ENCODE measurements at regions of chr13 and their contacts with region 1.

Region 1: DNA sequence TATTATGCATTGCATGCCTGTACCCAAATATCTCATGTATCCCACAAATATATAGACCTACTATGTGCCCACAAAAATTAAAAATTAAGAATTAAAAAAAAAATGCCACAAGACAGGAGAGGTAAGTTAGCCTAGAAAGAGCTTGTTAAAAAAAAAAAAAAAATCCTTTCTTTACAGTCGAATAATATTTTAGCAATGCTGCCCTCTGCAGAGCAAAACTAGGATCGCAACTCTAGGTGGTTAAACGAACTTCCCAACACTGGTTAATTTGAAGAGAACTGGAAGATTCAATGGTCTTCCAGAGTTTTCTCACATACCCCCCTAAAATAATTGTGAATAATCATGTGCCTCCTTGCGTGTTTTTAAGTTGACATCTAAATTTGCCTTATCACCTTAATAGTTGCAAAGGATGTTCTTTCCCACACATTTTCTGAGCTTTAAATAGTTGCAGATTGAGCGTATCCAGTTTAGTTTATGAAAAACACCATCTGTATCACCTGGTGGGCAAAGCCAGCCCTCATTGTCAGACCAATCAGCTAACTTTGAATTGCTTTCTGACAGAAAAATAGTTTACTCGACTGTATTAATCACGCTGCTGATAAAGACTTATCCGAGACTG is 47.4 kb upstream of the RCBTB2 start:
- DNase-seq: no peak
- ATAC-seq: peak; percentile 47
- H3K4me3 Mint-ChIP-seq: no peak overlapping the region
- H3K27ac Mint-ChIP-seq: no peak overlapping the region
- H3K4me1 Mint-ChIP-seq: peaks cover 21% of the 10 kb centered on the region
- H3K27me3 Mint-ChIP-seq: peaks cover 51% of the 10 kb centered on the region
- CTCF ChIP-seq: peak; percentile 38

Region 2: DNA sequence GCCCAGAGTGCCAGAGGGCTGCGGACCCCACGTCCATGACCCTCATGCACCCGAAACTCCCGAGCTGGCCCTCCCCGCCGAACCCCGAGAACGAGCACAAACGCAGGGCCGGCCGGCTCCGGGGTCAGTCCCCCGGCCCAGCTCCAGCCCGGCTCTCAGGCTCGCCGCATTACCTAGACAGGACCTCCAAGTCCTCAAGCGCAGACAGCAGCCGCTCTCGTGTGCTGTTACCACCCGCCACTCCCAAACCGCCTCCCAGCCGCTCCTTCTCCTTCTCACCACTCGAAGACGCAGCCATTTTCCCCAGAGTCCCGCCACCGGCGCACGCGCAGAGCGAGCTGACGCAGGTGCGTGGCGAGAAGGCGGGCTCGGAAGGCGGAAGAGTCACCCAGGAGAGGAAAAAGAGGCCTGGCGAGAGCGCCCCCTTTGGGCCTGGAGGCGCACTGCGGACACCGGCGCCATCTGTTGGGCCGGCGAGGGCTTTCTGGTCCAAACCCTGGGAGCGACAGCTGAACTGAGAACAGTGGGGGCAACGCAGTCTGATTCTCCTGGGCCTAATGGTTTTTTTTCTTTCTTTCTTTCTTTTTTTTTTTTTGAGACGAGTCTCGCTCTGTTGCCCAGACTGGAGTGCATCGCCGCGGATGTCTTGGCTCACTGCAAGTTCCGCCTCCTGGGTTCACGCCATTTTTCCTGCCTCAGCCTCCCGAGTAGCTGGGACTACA is 485.4 kb before region 1 on chr13 and contains the start of gene MED4:
- CTCF ChIA-PET with region 1: interaction called, 12 read pairs
- POLR2A ChIA-PET with region 1: interaction called, 3 read pairs
- intact Hi-C with region 1: no loop called
- DNase-seq: peak; percentile 99
- ATAC-seq: peak; percentile 99
- H3K4me3 Mint-ChIP-seq: peak within 1 kb of the TSS; percentile 96
- H3K27ac Mint-ChIP-seq: peak within 1 kb of the TSS; percentile 90
- H3K4me1 Mint-ChIP-seq: peaks cover 34% of the 10 kb centered on the region
- H3K27me3 Mint-ChIP-seq: peaks cover 5% of the 10 kb centered on the region
- CTCF ChIP-seq: peak; percentile 84
- total RNA-seq, gene MED4: 50.4 and 51.9 TPM in 2 replicates

Region 3: GRCh38 chr13:48110931-48111721 is 469.2 kb before region 1 on chr13:
- CTCF ChIA-PET with region 1: no interaction called
- POLR2A ChIA-PET with region 1: no interaction called
- intact Hi-C with region 1: no loop called
- DNase-seq: no peak
- ATAC-seq: no peak
- H3K4me3 Mint-ChIP-seq: no peak overlapping the region
- H3K27ac Mint-ChIP-seq: no peak overlapping the region
- H3K4me1 Mint-ChIP-seq: no peaks in the 10 kb centered on the region
- H3K27me3 Mint-ChIP-seq: peaks cover 21% of the 10 kb centered on the region
- CTCF ChIP-seq: no peak

Region 4: DNA sequence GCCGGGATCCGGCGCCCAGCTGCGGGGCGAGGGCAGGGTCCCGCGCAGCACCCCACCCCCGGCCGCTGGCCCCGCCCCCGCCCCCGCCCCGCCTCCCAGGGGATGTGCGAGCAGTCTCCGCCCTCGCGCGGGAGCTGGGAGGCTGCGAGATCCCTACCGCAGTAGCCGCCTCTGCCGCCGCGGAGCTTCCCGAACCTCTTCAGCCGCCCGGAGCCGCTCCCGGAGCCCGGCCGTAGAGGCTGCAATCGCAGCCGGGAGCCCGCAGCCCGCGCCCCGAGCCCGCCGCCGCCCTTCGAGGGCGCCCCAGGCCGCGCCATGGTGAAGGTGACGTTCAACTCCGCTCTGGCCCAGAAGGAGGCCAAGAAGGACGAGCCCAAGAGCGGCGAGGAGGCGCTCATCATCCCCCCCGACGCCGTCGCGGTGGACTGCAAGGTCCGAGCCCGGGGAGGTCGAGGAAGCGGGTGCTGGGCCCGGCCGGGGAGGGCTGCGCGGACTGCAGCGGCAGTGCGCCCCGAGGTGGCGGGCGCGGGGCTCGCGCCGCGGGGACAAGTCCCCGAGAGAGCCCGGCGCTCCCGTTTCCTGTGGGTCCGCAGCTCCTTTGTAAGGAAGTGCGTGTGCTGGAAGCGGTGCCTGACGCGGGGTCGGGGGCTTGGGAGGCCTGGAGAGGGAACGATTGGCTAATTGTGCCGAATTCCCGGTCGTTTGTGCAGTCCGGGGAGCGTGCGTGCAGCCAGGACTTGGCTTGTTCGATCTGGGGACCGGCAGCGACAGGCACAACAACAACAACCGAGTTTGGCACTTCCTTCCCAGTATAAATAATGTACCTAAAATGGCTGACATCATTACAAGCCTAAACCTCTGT is 347.0 kb before region 1 on chr13 and contains the start of gene ITM2B:
- CTCF ChIA-PET with region 1: interaction called, 9 read pairs
- POLR2A ChIA-PET with region 1: interaction called, 3 read pairs
- intact Hi-C with region 1: loop called (anchors 1 kb)
- DNase-seq: peak; percentile 65
- ATAC-seq: peak; percentile 76
- H3K4me3 Mint-ChIP-seq: peak within 1 kb of the TSS; percentile 93
- H3K27ac Mint-ChIP-seq: peak within 1 kb of the TSS; percentile 87
- H3K4me1 Mint-ChIP-seq: peaks cover 54% of the 10 kb centered on the region
- H3K27me3 Mint-ChIP-seq: peaks cover 7% of the 10 kb centered on the region
- CTCF ChIP-seq: no peak
- total RNA-seq, gene ITM2B: 102 and 114 TPM in 2 replicates

Region 5: GRCh38 chr13:48400850-48401291 is 179.4 kb before region 1 on chr13:
- CTCF ChIA-PET with region 1: interaction called, 6 read pairs
- POLR2A ChIA-PET with region 1: no interaction called
- intact Hi-C with region 1: loop called (anchors 1 kb)
- DNase-seq: no peak
- ATAC-seq: no peak
- H3K4me3 Mint-ChIP-seq: no peak overlapping the region
- H3K27ac Mint-ChIP-seq: no peak overlapping the region
- H3K4me1 Mint-ChIP-seq: peaks cover 15% of the 10 kb centered on the region
- H3K27me3 Mint-ChIP-seq: no peaks in the 10 kb centered on the region
- CTCF ChIP-seq: no peak

Region 6: GRCh38 chr13:48424212-48424611 is 156.1 kb before region 1 on chr13:
- CTCF ChIA-PET with region 1: no interaction called
- POLR2A ChIA-PET with region 1: no interaction called
- intact Hi-C with region 1: no loop called
- DNase-seq: no peak
- ATAC-seq: no peak
- H3K4me3 Mint-ChIP-seq: no peak overlapping the region
- H3K27ac Mint-ChIP-seq: no peak overlapping the region
- H3K4me1 Mint-ChIP-seq: peaks cover 4% of the 10 kb centered on the region
- H3K27me3 Mint-ChIP-seq: no peaks in the 10 kb centered on the region
- CTCF ChIP-seq: no peak

Region 7: GRCh38 chr13:48532506-48533499 is 47.5 kb before region 1 on chr13 and contains the start of gene RCBTB2:
- CTCF ChIA-PET with region 1: interaction called, 10 read pairs
- POLR2A ChIA-PET with region 1: interaction called, 5 read pairs
- intact Hi-C with region 1: loop called (anchors 1 kb)
- DNase-seq: peak; percentile 98
- ATAC-seq: peak; percentile 94
- H3K4me3 Mint-ChIP-seq: peak within 1 kb of the TSS; percentile 95
- H3K27ac Mint-ChIP-seq: peak within 1 kb of the TSS; percentile 94
- H3K4me1 Mint-ChIP-seq: peaks cover 20% of the 10 kb centered on the region
- H3K27me3 Mint-ChIP-seq: peaks cover 12% of the 10 kb centered on the region
- CTCF ChIP-seq: no peak
- total RNA-seq, gene RCBTB2: 2.3 and 2.4 TPM in 2 replicates

Region 8: GRCh38 chr13:48612896-48613295 is 32.6 kb after region 1 on chr13:
- CTCF ChIA-PET with region 1: no interaction called
- POLR2A ChIA-PET with region 1: no interaction called
- intact Hi-C with region 1: no loop called
- DNase-seq: no peak
- ATAC-seq: no peak
- H3K4me3 Mint-ChIP-seq: no peak overlapping the region
- H3K27ac Mint-ChIP-seq: no peak overlapping the region
- H3K4me1 Mint-ChIP-seq: no peaks in the 10 kb centered on the region
- H3K27me3 Mint-ChIP-seq: peaks cover 15% of the 10 kb centered on the region
- CTCF ChIP-seq: no peak